ENCODE measurements at regions of chr1 and their contacts with region 1.

Region 1: GRCh38 chr1:205591522-205592351 is 40.1 kb downstream of the ELK4 start:
- DNase-seq: peak; percentile 99
- H3K4me3 Mint-ChIP-seq: peak overlapping the region; percentile 64
- H3K27ac Mint-ChIP-seq: peak overlapping the region; percentile 39
- H3K4me1 Mint-ChIP-seq: peaks cover 18% of the 10 kb centered on the region
- H3K27me3 Mint-ChIP-seq: no peaks in the 10 kb centered on the region
- CTCF ChIP-seq: peak; percentile 100

Region 2: DNA sequence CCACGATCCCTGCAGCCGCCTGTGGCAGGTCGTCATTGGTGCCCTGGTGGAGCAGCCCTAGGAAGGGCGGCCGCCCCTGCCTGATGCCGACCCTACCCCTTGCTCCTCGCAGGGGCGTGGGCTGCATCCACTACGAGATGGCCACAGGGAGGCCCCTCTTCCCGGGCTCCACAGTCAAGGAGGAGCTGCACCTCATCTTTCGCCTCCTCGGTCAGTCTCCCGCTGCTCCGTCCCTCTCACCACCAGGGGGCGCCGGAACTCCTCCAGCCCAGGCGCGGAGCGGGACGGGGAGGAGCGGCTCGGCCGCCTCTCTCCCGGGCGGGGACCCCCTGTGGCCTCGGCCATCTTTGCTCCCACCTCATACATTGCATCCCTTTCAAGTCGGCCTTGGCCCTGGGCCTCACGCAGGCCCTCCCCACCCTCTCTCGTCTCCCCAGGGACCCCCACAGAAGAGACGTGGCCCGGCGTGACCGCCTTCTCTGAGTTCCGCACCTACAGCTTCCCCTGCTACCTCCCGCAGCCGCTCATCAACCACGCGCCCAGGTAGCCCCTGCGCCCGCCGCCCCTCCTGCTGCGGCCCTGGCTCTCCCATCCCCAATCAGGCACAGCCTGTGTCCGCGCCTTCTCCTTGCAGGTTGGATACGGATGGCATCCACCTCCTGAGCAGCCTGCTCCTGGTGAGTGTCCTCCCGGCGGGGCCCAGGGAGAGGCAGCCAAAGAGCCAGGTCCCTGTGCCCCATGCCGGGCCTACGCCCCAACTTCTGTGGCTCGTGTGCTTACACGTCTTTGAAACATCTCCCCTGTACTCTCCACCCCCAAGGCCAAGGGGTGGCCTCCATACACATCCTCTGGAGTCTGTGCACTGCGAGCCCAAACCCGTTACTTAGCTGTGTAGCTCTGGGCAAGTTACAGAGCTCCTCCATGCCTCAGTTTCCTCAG is 62.6 kb before region 1 on chr1:
- CTCF ChIA-PET with region 1: interaction called, 25 read pairs
- POLR2A ChIA-PET with region 1: interaction called, 15 read pairs
- intact Hi-C with region 1: loop called (anchors 1 kb)
- DNase-seq: peak; percentile 89
- H3K4me3 Mint-ChIP-seq: peak overlapping the region; percentile 32
- H3K27ac Mint-ChIP-seq: no peak overlapping the region
- H3K4me1 Mint-ChIP-seq: peaks cover 6% of the 10 kb centered on the region
- H3K27me3 Mint-ChIP-seq: no peaks in the 10 kb centered on the region
- CTCF ChIP-seq: peak; percentile 100

Region 3: DNA sequence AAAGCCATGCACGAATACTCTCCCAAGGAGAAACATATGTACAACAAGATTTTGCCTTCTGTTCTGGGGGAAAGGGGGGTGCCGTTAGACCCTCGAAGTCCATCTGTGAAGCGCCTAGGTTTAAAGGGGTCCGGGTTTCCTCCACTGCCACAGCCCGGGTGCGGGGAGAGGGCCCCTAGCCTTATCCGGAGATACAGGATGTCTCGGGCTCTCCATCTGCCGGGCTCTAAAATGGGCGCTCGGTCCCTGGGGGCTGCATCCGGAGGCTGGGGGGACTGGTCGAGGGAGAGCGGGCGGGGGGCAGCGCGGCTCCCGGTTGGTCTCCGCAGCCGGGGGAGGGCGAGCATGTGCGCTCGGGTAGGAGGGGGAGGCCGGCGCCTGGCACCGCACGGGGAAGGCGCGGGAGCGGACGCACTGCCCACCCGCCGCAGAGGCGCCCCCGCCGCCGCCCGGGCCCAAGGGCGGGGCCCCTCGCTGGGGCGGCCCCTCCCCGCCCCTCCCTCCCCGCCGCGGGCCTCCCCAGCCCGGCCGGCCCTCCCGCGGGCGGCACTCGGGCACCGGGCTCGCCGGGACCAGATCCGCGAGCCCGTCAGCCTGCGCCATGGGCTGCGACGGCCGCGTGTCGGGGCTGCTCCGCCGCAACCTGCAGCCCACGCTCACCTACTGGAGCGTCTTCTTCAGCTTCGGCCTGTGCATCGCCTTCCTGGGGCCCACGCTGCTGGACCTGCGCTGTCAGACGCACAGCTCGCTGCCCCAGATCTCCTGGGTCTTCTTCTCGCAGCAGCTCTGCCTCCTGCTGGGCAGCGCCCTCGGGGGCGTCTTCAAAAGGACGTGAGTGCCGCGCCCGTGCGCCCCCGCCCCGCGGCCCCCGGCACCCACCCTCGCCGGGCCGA is 23.0 kb before region 1 on chr1:
- CTCF ChIA-PET with region 1: interaction called, 10 read pairs
- POLR2A ChIA-PET with region 1: interaction called, 5 read pairs
- intact Hi-C with region 1: no loop called
- DNase-seq: no peak
- H3K4me3 Mint-ChIP-seq: peak overlapping the region; percentile 26
- H3K27ac Mint-ChIP-seq: no peak overlapping the region
- H3K4me1 Mint-ChIP-seq: no peaks in the 10 kb centered on the region
- H3K27me3 Mint-ChIP-seq: peaks cover 83% of the 10 kb centered on the region
- CTCF ChIP-seq: no peak

Region 4: GRCh38 chr1:205626216-205626615 is 34.5 kb after region 1 on chr1:
- CTCF ChIA-PET with region 1: interaction called, 185 read pairs
- POLR2A ChIA-PET with region 1: interaction called, 555 read pairs
- intact Hi-C with region 1: no loop called
- DNase-seq: no peak
- H3K4me3 Mint-ChIP-seq: no peak overlapping the region
- H3K27ac Mint-ChIP-seq: peak overlapping the region; percentile 70
- H3K4me1 Mint-ChIP-seq: peaks cover 30% of the 10 kb centered on the region
- H3K27me3 Mint-ChIP-seq: no peaks in the 10 kb centered on the region
- CTCF ChIP-seq: no peak

Region 5: GRCh38 chr1:205668951-205669340 is 77.2 kb after region 1 on chr1:
- CTCF ChIA-PET with region 1: interaction called, 17 read pairs
- POLR2A ChIA-PET with region 1: interaction called, 4 read pairs
- intact Hi-C with region 1: no loop called
- DNase-seq: no peak
- H3K4me3 Mint-ChIP-seq: no peak overlapping the region
- H3K27ac Mint-ChIP-seq: no peak overlapping the region
- H3K4me1 Mint-ChIP-seq: peaks cover 28% of the 10 kb centered on the region
- H3K27me3 Mint-ChIP-seq: no peaks in the 10 kb centered on the region
- CTCF ChIP-seq: no peak

Region 6: GRCh38 chr1:205711104-205712020 is 119.6 kb after region 1 on chr1:
- CTCF ChIA-PET with region 1: interaction called, 126 read pairs
- POLR2A ChIA-PET with region 1: interaction called, 24 read pairs
- intact Hi-C with region 1: loop called (anchors 2 kb)
- DNase-seq: peak; percentile 93
- H3K4me3 Mint-ChIP-seq: no peak overlapping the region
- H3K27ac Mint-ChIP-seq: no peak overlapping the region
- H3K4me1 Mint-ChIP-seq: peaks cover 30% of the 10 kb centered on the region
- H3K27me3 Mint-ChIP-seq: no peaks in the 10 kb centered on the region
- CTCF ChIP-seq: peak; percentile 97

Region 7: GRCh38 chr1:205812878-205813754 is 221.4 kb after region 1 on chr1 and contains the start of gene SLC41A1:
- CTCF ChIA-PET with region 1: no interaction called
- POLR2A ChIA-PET with region 1: no interaction called
- intact Hi-C with region 1: no loop called
- DNase-seq: peak; percentile 98
- H3K4me3 Mint-ChIP-seq: peak within 1 kb of the TSS; percentile 87
- H3K27ac Mint-ChIP-seq: peak within 1 kb of the TSS; percentile 40
- H3K4me1 Mint-ChIP-seq: peaks cover 42% of the 10 kb centered on the region
- H3K27me3 Mint-ChIP-seq: no peaks in the 10 kb centered on the region
- CTCF ChIP-seq: no peak
- total RNA-seq, gene SLC41A1: 48.8 and 49.7 TPM in 2 replicates